AG04449 (cell line): ENCODE measurements at regions of chr12 and their contacts with region 1.

Region 1: DNA sequence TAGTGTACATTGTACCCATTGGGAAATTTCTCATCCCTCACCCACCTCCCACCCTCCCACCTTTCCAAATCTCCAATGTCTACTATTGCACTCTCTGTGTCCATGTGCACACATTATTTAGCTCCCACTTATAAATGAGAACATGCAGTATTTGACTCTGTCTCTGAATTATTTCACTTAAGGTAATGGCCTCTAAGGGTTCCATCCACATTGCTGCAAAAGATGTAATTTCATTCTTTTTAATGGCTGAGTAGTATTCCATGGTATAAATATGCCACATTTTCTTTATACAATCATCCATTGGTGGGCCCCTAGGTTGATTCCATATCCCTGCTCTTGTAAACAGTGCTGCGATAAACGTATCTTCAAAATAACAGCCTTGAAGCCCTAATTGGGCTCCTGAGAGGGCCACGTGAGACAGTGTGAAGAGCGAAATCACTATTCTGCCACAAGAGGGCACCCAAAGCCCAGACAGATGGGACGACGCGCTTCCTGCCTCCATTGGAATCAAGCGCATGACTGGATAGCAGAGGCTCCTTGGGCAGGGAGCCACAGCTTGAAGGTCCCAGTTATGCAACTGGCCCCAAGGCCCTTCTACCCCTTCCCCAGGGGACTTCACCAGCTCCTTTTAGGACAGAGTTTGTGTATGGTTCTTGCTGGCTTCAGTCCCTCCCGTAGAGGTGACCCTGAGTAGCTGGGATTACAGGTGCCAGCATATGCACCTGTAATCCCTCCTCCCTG is 21.3 kb upstream of the CD27 start:
- DNase-seq: peak; percentile 68
- H3K4me3 ChIP-seq: no peak overlapping the region
- CTCF ChIP-seq: peak; percentile 78

Region 2: DNA sequence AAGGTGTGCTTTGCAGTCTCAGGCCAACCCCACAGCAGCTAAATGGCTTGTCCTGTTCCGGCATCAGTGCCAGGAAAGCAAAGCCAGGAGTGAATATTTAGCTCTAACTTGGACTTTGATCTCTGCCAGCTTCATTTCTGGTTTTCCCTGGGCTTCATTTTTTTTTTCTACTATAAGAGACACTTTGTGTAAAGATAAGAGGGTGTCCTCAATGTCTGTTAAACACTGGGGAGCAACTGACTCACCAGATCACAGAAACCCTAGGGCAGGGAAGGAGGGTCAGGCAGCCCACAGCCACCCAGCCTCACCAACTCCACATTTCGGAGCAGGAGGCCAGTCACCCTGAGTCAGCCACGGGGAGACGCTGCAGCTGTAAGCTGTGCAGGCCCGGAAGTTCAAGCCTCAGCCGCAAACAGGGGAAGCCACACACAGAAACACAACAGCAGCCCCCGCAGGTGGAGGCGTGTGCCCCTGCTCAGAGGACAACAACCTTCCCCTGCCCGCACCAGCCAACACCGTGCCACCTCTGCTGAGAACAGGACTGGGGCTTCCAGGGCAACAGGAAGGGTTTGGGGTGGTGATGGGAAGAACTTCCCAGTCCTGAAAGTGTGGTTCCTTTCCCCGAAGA is 87.9 kb before region 1 on chr12:
- CTCF ChIA-PET with region 1: interaction called, 10 read pairs
- POLR2A ChIA-PET with region 1: no interaction called
- DNase-seq: no peak
- H3K4me3 ChIP-seq: peak overlapping the region; percentile 54
- CTCF ChIP-seq: peak; percentile 86

Region 3: DNA sequence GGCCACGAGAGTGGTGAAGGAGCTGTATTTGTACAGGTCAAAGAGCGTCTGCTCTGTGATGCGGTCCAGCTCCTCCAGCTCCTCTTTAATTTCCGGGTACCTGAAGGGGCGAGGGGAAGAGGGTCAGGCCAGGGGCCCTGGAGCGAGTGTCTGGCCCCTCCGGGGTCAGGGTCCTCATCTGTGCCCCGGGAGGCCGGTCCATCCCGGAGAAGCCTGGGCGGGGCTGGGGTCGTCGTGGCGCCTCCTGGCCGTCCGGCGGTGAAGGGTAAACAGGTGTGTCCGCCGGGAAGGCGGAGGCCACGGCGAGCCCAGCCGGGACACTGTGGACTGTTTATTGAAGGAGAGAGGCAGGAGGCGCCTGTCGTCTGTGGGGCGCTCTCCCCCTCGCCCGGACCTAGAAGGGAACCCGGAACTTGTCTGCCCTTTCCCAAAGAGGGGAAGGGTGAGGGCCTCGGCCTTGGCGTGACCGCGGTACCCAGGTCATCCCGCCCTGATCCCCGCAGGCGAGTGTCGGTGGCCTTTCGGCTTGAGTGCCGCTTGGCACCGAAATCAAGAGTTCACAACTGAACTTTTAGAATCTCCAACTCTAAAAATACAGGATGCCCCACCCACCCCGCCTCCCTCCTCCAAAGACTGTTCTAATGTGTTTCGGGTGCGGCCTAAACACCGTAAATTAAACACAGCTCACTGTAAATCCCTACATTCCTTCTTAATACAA is 59.7 kb before region 1 on chr12:
- CTCF ChIA-PET with region 1: no interaction called
- POLR2A ChIA-PET with region 1: no interaction called
- DNase-seq: no peak
- H3K4me3 ChIP-seq: peak overlapping the region; percentile 59
- CTCF ChIP-seq: no peak

Region 4: DNA sequence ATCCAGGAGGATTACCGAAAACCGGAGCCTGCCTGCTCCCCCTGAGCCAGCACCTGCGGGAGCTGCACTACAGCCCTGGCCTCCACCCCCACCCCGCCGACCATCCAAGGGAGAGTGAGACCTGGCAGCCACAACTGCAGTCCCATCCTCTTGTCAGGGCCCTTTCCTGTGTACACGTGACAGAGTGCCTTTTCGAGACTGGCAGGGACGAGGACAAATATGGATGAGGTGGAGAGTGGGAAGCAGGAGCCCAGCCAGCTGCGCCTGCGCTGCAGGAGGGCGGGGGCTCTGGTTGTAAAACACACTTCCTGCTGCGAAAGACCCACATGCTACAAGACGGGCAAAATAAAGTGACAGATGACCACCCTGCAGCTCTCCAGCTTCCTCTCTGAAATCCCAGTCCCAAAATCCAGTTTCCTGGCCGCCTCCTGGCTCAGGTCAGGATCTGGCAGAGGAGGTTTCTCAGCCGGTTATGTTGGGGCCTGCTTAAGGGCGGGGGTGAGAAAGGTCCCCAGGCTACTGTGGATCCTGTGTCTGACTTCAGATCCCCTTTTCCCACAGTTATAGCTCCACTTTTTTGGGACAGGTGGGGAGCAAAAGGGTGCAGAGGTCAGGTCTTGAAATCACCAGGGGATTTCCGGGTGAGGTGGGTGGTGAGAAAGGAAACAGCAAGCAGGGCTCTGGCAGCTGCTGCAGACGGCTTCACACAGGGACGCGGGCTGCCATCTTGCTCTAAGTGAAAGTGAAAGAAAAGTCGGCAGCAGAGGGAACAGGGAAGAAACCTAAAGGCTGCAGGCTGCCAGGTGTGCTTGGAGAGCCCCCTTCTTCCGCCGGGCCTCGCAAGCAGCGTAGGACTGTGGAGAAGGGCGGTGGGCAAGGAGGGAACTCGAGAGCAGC is 28.2 kb after region 1 on chr12 and contains the start of gene TAPBPL:
- CTCF ChIA-PET with region 1: interaction called, 199 read pairs
- POLR2A ChIA-PET with region 1: interaction called, 4 read pairs
- DNase-seq: peak; percentile 24
- H3K4me3 ChIP-seq: peak within 1 kb of the TSS; percentile 75
- CTCF ChIP-seq: no peak

Region 5: GRCh38 chr12:6554168-6555017 is 131.0 kb after region 1 on chr12:
- CTCF ChIA-PET with region 1: interaction called, 41 read pairs
- POLR2A ChIA-PET with region 1: no interaction called
- DNase-seq: no peak
- H3K4me3 ChIP-seq: peak overlapping the region; percentile 83
- CTCF ChIP-seq: peak; percentile 78